Activated CD4-positive, alpha-beta T cell treated with anti-CD3 and anti-CD28 coated beads for 36 hours (primary cell): ENCODE measurements at regions of chr2 and their contacts with region 1.

Region 1: GRCh38 chr2:9725106-9725505 is 94.3 kb upstream of the YWHAQ start:
- DNase-seq: no peak
- ATAC-seq: no peak
- H3K4me3 Mint-ChIP-seq: no peak overlapping the region
- H3K27ac Mint-ChIP-seq: no peak overlapping the region
- H3K4me1 Mint-ChIP-seq: no peaks in the 10 kb centered on the region
- H3K27me3 Mint-ChIP-seq: no peaks in the 10 kb centered on the region

Region 2: GRCh38 chr2:9663008-9663879 is 61.9 kb before region 1 on chr2:
- CTCF ChIA-PET with region 1: no interaction called
- POLR2A ChIA-PET with region 1: no interaction called
- intact Hi-C with region 1: loop called in 1 of 2 experiments (anchors 1 kb)
- DNase-seq: no peak
- ATAC-seq: peak; percentile 49
- H3K4me3 Mint-ChIP-seq: no peak overlapping the region
- H3K27ac Mint-ChIP-seq: no peak overlapping the region
- H3K4me1 Mint-ChIP-seq: peaks cover 6% of the 10 kb centered on the region
- H3K27me3 Mint-ChIP-seq: no peaks in the 10 kb centered on the region

Region 3: GRCh38 chr2:9799665-9800632 is 74.8 kb after region 1 on chr2:
- CTCF ChIA-PET with region 1: no interaction called
- POLR2A ChIA-PET with region 1: no interaction called
- intact Hi-C with region 1: no loop called
- DNase-seq: peak; percentile 93
- ATAC-seq: peak; percentile 92
- H3K4me3 Mint-ChIP-seq: peak overlapping the region; percentile 39
- H3K27ac Mint-ChIP-seq: peak overlapping the region; percentile 86
- H3K4me1 Mint-ChIP-seq: peaks cover 24% of the 10 kb centered on the region
- H3K27me3 Mint-ChIP-seq: peaks cover 2% of the 10 kb centered on the region